Motor neuron (in vitro differentiated cells): ENCODE measurements at regions of chr9 and their contacts with region 1.

Region 1: GRCh38 chr9:75712700-75713099 is 177.8 kb upstream of the PCSK5 start:
- ATAC-seq: no peak
- H3K4me3 ChIP-seq: no peak overlapping the region
- H3K27ac ChIP-seq: no peak overlapping the region
- H3K4me1 ChIP-seq: no peaks in the 10 kb centered on the region

Region 2: DNA sequence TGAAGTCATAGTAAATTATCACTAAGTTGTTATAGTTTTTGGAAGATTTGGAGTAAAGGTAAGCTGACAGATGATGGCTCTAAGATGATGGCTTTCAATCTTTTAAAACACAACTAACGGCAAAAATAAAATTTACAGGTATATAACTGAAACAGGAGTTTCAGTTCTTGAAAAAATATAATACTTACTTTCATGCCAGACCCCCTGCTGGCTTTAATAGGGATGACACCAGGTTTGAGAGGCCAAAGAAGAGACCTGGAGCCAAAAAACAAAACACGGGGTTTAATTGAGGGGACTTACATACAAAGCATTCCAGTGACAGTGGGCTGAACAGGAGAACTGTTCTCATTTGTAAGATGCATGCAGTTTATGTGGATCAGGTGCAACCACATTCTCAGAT is 123.9 kb before region 1 on chr9:
- in situ Hi-C with region 1: loop called in 1 of 9 experiments (anchors 25 kb)
- ATAC-seq: no peak
- H3K4me3 ChIP-seq: no peak overlapping the region
- H3K27ac ChIP-seq: no peak overlapping the region
- H3K4me1 ChIP-seq: no peaks in the 10 kb centered on the region